Right ventricle myocardium inferior (tissue), 1 donor: ENCODE measurements at regions of chr20 and their contacts with region 1.

Region 1: DNA sequence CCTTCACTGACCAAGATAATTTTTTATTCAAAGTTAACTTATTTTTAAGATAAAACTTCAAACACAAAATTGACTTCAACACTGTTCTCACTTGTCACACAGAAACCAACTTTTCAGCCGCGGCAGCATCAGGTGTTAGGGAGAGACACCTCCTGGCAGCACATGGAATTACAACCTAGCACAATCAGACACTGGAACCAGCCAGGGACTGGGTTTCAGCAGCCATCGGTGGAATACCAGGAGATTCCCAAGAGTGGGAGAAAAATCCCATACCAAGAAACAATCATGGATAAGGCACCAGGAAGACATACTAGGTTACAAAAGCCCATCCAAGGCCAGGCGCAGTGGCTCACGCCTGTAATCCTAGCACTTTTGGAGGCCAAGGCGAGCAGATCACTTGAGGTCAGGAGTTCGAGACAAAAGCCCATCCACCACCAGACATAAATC is 70.0 kb downstream of the SNX5 start:
- DNase-seq: peak; percentile 82
- ATAC-seq: peak; percentile 58

Region 2: GRCh38 chr20:17504898-17505635 is 393.5 kb before region 1 on chr20:
- intact Hi-C with region 1: loop called (anchors 2 kb)
- DNase-seq: peak; percentile 89
- ATAC-seq: peak; percentile 88

Region 3: GRCh38 chr20:17536944-17537444 is 361.6 kb before region 1 on chr20:
- intact Hi-C with region 1: loop called (anchors 2 kb)
- DNase-seq: no peak
- ATAC-seq: peak; percentile 98

Region 4: DNA sequence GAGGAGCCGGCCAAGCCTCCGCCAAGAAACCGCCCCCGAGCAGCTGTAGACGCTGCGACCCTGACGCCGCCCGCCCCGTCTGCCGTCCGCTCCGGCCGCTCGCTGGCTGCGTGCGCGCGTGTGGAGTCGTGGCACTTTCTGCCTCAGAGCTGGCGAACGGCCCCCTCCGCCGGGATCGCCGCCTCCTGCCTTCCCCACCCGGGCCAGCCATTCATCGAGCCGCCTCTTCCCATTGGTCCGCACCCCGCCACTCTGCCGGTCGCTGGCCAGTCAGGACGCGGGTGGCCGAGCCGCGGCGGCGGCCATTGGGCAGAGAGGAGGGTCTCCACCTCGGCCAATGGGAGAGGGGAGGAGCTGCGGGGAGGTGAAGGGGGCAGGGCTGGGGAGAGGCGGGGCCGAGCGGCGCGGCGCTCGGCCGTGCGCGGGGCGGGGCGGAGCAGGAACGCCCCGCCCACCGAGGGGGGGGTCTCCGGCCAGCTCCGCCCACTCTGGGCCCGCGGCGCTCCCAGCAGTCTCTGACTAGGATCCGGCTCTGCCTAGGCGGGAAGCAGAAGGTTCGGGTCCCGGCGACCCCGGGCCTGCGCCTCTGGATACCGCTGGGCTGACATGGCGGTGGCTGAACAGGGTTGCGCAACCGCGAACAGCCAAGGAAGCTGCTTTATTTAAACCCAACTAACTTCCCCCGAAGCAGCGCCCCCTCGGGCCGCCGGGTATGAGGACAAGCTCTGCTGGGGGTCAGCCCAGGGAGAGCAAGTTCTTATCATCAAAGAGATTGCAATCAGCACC is 216.3 kb before region 1 on chr20 and contains the start of gene RRBP1:
- intact Hi-C with region 1: loop called (anchors 1 kb)
- DNase-seq: peak; percentile 99
- ATAC-seq: peak; percentile 96
- total RNA-seq, gene RRBP1: 38.5 TPM

Region 5: GRCh38 chr20:17749975-17750721 is 148.4 kb before region 1 on chr20:
- intact Hi-C with region 1: loop called (anchors 5 kb)
- DNase-seq: peak; percentile 81
- ATAC-seq: peak; percentile 92

Region 6: GRCh38 chr20:17806739-17807441 is 91.7 kb before region 1 on chr20:
- intact Hi-C with region 1: loop called (anchors 5 kb)
- DNase-seq: peak; percentile 86
- ATAC-seq: peak; percentile 91

Region 7: DNA sequence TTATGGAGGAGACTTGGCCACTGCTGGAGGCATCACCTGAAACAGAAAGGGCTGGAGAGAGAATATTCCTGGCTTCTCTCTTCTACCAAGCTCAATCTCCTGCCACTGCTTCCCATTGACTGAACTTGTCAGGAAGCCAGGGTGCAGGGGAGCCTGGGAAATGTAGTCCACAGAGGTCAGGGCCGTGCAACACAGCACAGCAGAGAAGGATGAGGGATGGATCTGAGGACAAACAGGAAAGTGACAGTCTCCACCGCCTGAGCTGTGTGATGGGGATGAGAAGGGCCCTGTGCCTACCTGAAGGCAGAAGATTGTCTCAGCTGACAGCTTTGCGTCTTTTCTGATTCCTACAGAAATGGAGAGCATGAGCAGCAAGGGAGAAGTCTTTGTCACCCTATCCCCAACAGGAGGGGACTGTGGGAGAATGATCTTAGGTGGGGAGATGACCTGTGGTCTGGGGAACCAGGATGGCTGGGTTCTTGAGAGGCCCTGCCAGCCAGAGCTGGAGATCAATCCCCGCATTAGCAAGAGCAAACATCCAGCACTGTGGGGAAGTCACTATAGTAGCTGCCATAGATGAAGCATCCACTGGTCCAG is 44.2 kb before region 1 on chr20:
- intact Hi-C with region 1: loop called (anchors 5 kb)
- DNase-seq: no peak
- ATAC-seq: peak; percentile 42